ENCODE measurements at regions of chr17 and their contacts with region 1.

Region 1: GRCh38 chr17:12164085-12164484 is 143.4 kb downstream of the MAP2K4 start:
- DNase-seq: no peak
- H3K4me3 ChIP-seq: no peak overlapping the region
- H3K27ac ChIP-seq: no peak overlapping the region
- H3K4me1 ChIP-seq: no peaks in the 10 kb centered on the region
- H3K27me3 ChIP-seq: no peaks in the 10 kb centered on the region
- CTCF ChIP-seq: no peak
- POLR2A ChIP-seq: no peak

Region 2: GRCh38 chr17:11535231-11535630 is 628.9 kb before region 1 on chr17:
- intact Hi-C with region 1: loop called in 1 of 2 experiments (anchors 10 kb)
- DNase-seq: no peak
- H3K4me3 ChIP-seq: no peak overlapping the region
- H3K27ac ChIP-seq: no peak overlapping the region
- H3K4me1 ChIP-seq: no peaks in the 10 kb centered on the region
- H3K27me3 ChIP-seq: no peaks in the 10 kb centered on the region
- CTCF ChIP-seq: no peak
- POLR2A ChIP-seq: no peak

Measured in adrenal gland (tissue), 19 donors.